Tibial artery (tissue), 4 donors: ENCODE measurements at regions of chr2 and their contacts with region 1.

Region 1: GRCh38 chr2:73926493-73927338 is at the start of gene DGUOK:
- DNase-seq: peak; percentile 99
- H3K4me3 ChIP-seq: peak within 1 kb of the TSS; percentile 75 to 82
- H3K27ac ChIP-seq: peak within 1 kb of the TSS; percentile 93 to 95
- H3K4me1 ChIP-seq: peaks cover 0 to 48% (median 29%) of the 10 kb centered on the region in 4 donors
- H3K27me3 ChIP-seq: no peaks in the 10 kb centered on the region
- CTCF ChIP-seq: no peak

Region 2: DNA sequence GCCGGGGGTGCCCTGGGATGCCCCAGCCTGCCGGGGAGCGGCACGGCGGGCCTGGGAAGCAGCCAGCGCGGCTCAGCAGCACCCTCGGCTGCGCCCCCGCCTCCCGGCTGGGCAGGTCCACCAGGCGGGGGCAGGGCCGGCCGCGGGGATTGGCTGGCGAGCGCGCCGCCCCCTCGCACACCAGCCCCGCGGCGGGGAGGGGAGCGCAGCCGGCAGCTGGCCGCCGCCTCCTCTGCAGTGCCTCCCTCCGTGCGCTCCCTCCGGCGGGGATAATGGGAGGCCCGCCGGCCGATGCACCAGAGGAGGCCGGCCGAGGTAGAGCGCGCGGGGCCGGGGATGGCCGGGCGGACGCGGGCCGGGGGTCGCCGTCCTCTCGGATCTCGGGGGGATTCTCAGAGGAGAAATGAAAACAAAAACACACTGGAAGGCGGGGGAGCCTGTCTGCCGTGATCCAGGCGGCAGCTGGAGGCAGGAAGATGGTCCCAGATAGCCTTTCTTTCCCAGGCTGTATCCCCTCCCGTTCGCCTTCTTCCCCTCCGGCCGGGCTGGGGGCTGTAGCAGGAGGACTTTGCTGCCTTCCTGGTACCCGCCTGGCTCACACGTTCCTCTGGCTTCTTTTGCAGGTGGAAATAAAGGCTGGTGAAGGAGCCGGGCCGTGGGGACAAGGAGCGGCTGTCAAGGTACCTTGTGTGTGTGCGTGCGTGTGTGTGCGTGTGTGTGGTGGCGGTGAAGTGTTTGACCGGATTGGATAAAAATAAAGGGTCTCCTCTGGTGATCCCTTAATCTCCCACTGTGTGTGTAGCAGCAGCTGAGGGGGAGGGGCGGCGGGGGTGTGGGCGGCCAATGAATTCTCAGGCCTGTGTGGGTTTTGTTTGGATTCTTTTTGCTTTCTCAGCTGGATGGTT is 76.0 kb after region 1 on chr2:
- intact Hi-C with region 1: loop called (anchors 5 kb)
- DNase-seq: peak; percentile 85 to 91
- H3K4me3 ChIP-seq: peak overlapping the region; percentile 60 to 66
- H3K27ac ChIP-seq: peak overlapping the region; percentile 48 to 70
- H3K4me1 ChIP-seq: peaks cover 0 to 59% (median 29%) of the 10 kb centered on the region in 4 donors
- H3K27me3 ChIP-seq: no peaks in the 10 kb centered on the region
- CTCF ChIP-seq: no peak